Activated CD8-positive, alpha-beta T cell treated with anti-CD3 and anti-CD28 coated beads, Interleukin-2, amount 10 ng/mL, durations not matched to agents 7 days and 5 days (primary cell): ENCODE measurements at regions of chr16 and their contacts with region 1.

Region 1: DNA sequence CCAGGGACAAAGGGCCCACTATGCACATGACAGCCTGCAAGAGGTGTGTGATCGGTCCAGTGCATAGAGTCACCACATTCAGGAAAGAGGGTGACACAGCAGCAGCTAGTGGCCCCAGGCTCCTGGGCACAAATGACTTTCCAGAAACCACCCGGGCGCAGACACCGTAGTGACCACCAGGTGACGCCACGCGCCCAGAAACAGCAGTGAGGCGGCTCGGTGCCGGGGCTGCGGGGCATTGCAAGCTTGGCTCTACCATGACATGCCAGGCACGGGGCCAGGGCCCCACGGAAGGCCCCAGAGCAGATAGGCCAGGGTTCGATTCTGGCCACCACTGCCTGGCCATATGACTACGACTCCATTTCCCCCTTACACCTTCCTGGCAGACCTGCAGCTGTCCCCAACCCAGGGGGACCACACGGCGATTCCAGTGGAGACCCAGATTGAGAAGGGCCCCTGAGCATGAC is 6.7 kb downstream of the RHBDF1 start:
- DNase-seq: peak; percentile 89
- ATAC-seq: peak; percentile 90
- H3K4me3 Mint-ChIP-seq: no peak overlapping the region
- H3K27ac Mint-ChIP-seq: no peak overlapping the region
- H3K4me1 Mint-ChIP-seq: peaks cover 5% of the 10 kb centered on the region
- H3K27me3 Mint-ChIP-seq: peaks cover 10% of the 10 kb centered on the region

Region 2: DNA sequence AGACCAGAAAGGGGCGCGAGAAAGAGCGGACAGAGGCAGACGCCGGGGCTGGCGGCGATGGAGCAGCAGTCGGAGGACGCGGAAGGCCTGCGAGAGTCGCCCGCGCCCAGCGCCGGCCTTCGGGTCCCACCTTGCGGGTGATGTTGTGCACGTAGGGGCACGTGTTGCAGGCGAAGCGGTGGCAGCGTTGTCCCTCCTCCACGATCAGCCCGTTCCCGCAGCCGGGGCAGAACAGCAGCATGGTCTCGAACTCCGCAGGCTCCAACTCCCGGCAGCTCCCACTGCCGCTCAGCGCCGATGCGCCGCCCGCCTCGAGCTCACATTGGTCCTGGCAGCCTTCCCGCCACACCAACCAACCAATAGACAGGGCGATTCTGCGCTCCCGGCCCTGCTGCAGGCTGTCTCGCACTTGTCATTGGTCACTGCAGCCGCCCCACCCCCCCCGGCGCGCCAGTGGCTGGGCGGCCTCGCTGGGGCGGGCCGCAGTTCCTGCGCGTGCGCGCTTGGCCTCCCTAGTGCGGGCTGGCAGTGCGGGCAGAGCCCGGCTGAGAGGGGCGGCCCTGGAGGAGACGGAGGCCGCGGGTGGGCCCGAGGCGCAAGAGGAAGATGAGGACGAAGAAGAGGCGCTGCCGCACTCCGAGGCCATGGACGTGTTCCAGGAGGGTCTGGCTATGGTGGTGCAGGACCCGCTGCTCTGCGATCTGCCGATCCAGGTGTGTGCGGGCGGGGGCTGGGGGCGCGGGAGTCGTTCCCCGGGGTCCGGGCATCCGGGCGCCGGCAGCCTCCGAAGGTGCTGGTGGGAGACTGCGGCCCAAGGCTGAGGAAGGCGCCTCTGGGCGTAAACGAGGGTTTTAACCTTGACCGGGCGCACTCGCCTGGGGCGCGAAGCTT is 12.1 kb before region 1 on chr16 and contains the starts of genes POLR3K and SNRNP25:
- CTCF ChIA-PET with region 1: interaction called, 30 read pairs
- POLR2A ChIA-PET with region 1: interaction called, 7 read pairs
- DNase-seq: peak; percentile 99
- ATAC-seq: peak; percentile 99
- H3K4me3 Mint-ChIP-seq: peak within 1 kb of the TSS; percentile 91
- H3K27ac Mint-ChIP-seq: peak within 1 kb of the TSS; percentile 90
- H3K4me1 Mint-ChIP-seq: peaks cover 35% of the 10 kb centered on the region
- H3K27me3 Mint-ChIP-seq: no peaks in the 10 kb centered on the region
- total RNA-seq, gene POLR3K: 47.7 to 48.2 TPM
- total RNA-seq, gene SNRNP25: 62.3 to 63.2 TPM

Region 3: GRCh38 chr16:84718-85406 is 19.2 kb after region 1 on chr16:
- CTCF ChIA-PET with region 1: interaction called, 26 read pairs
- POLR2A ChIA-PET with region 1: interaction called, 3 read pairs
- DNase-seq: peak; percentile 79
- ATAC-seq: peak; percentile 76
- H3K4me3 Mint-ChIP-seq: peak overlapping the region; percentile 37
- H3K27ac Mint-ChIP-seq: peak overlapping the region; percentile 89
- H3K4me1 Mint-ChIP-seq: peaks cover 35% of the 10 kb centered on the region
- H3K27me3 Mint-ChIP-seq: no peaks in the 10 kb centered on the region

Region 4: GRCh38 chr16:96935-97381 is 31.3 kb after region 1 on chr16:
- CTCF ChIA-PET with region 1: interaction called, 265 read pairs
- POLR2A ChIA-PET with region 1: interaction called, 32 read pairs
- DNase-seq: peak; percentile 93
- ATAC-seq: peak; percentile 95
- H3K4me3 Mint-ChIP-seq: no peak overlapping the region
- H3K27ac Mint-ChIP-seq: no peak overlapping the region
- H3K4me1 Mint-ChIP-seq: peaks cover 8% of the 10 kb centered on the region
- H3K27me3 Mint-ChIP-seq: no peaks in the 10 kb centered on the region

Region 5: DNA sequence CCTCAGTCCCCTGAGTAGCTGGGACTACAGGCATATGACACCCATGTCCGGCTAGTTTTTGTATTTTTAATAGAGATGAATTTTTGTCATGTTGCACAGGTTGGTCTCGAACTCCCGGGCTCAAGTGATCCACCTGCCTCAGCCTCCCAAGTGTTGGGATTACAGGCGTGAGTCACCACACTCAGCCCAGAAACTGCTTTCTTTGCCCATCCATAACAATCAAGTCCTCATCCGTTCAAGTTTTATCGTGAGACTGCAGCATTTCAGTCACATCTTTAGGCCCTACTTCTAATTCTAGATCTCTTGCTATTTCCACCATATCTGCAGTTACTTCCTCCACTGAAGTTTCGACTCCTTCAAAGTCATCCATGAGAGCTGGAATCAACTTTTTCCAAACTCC is 66.4 kb after region 1 on chr16:
- CTCF ChIA-PET with region 1: interaction called, 11 read pairs
- POLR2A ChIA-PET with region 1: no interaction called
- DNase-seq: no peak
- ATAC-seq: no peak
- H3K4me3 Mint-ChIP-seq: no peak overlapping the region
- H3K27ac Mint-ChIP-seq: no peak overlapping the region
- H3K4me1 Mint-ChIP-seq: peaks cover 43% of the 10 kb centered on the region
- H3K27me3 Mint-ChIP-seq: no peaks in the 10 kb centered on the region

Region 6: DNA sequence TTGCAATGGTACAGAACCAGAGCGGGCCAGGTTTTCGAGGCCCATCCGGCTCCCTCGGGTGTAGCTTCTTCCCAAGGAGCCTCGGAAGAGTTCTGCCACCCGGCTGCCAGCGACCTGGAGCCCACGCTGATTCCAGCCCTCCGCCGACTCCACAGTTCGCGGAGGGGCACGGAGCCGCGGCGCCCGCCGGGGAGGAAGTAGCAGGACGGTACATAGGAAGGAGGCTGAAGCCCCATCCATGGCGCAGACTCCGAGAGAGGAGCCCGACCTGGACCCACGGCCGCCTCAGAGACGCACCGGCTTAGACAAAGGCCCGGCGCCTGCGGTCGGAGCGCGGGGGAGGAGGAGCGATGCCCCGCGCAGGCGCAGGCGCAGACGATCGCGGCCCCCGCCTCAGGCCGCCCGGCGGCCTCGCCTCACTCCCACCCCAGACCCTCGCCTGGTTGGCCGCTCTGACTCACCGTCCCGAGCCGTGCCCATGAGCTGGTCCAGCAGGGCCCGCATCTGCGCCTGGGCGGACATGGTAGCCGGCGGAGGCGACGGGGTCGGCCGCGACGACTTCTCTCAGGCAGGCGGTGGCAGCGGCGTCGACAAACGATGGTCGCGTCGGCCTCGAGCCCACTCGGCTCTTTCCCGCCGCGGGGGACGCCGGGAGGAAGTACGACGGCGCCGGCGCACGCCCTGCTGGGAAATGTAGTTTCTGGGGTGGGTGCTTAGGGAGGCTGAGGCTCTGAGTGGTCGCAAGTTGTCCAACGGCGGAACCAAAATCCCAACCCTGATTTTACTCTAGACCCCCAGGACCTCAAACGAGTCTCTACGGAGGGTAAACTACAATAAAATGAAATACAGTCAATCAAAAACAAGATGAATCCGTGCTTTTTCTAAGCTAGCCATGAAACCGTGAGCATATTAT is 163.4 kb after region 1 on chr16 and contains the start of gene LUC7L:
- CTCF ChIA-PET with region 1: no interaction called
- POLR2A ChIA-PET with region 1: no interaction called
- DNase-seq: peak; percentile 91
- ATAC-seq: peak; percentile 89
- H3K4me3 Mint-ChIP-seq: peak within 1 kb of the TSS; percentile 85
- H3K27ac Mint-ChIP-seq: peak within 1 kb of the TSS; percentile 91
- H3K4me1 Mint-ChIP-seq: peaks cover 29% of the 10 kb centered on the region
- H3K27me3 Mint-ChIP-seq: no peaks in the 10 kb centered on the region
- total RNA-seq, gene LUC7L: 56.1 to 58.4 TPM